Mammary epithelial cell (primary cell): ENCODE measurements at regions of chr10 and their contacts with region 1.

Region 1: DNA sequence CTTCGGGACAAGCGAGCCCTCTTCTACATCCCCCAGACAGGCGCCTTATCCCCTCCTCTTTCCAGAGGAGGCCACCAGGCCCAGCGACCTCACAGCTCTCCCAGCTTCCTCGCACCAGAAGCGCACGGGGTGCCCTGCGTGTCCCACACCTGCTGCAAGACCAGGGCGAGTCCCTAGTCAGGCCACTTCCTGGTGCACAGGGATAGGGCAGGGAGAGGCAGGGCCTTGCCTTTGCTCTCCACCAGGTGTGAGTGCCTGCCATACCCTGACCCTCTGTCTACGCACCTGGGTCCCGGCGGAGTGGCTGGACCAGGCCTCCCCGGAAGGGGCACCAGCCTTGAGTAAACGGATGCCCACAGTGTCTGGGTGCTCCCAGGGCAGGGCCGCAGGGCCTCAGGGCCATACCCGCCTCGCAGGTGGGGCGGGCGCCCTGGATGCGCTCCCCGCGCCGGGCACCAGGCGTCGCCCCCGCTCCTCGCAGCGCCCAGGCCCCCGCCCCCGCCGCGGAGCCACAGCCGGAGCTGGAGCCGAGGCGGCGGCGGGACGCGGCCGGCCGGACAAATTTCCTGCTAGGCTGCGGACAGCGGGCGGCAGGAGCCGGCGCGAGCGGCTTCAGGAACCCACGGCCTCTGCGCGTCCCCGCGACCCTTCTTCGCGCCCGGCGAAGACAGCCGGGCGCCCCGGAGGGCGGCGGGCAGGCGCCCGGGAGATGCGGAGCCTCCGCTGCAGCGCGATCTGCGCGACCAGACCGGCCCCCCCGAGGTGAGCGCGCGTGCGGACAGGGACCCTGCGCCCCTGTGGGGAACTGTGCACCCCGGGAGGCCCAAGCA is at the start of gene PTPRE:
- DNase-seq: peak; percentile 66
- H3K4me3 ChIP-seq: peak within 1 kb of the TSS; percentile 36 to 60 (median 55)
- H3K27ac ChIP-seq: no peak within 1 kb of the TSS
- H3K4me1 ChIP-seq: peaks cover 22% of the 10 kb centered on the region
- H3K27me3 ChIP-seq: no peaks in the 10 kb centered on the region
- CTCF ChIP-seq: peak; percentile 64 to 70
- total RNA-seq, gene PTPRE: 44.2 to 70.5 TPM

Region 2: GRCh38 chr10:127863231-127863825 is 43.4 kb before region 1 on chr10:
- CTCF ChIA-PET with region 1: no interaction called
- dilution Hi-C with region 1: loop called (anchors 5 kb)
- in situ Hi-C with region 1: no loop called
- intact Hi-C with region 1: no loop called
- DNase-seq: peak; percentile 21
- H3K4me3 ChIP-seq: no peak overlapping the region
- H3K27ac ChIP-seq: no peak overlapping the region
- H3K4me1 ChIP-seq: no peaks in the 10 kb centered on the region
- H3K27me3 ChIP-seq: no peaks in the 10 kb centered on the region
- CTCF ChIP-seq: no peak

Region 3: DNA sequence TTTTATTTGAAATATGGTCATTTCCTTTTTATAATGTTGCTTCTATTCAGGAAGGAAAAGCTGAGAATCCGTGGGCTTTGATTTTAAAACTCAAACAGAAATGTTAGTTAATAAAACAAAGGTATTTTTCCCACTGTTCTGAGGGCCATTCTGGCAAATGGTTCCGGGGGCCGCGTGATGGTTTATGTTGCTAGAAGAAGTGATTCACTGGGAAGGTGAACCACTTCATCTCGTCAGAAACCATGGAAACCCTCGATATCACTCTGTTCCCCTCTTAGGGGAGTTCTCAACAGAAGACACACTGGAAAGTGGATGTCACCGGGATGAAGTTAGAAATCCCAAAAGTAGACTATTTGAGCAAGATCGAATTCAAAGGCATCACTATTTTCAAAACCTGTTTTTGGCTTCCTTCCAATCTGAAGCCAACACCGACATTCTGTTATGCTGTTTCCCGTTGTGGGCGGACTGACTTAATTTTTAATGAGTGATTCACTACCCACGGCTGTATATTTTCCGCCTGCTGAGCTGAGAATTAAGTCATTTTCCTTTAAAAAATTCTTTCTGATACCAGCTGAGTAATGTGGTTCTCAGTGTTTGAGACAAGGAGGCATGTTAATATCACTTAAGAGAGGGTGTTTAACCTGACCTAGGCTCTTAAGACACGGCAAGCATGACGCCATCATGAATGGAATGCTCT is 84.2 kb after region 1 on chr10:
- CTCF ChIA-PET with region 1: no interaction called
- dilution Hi-C with region 1: no loop called
- in situ Hi-C with region 1: loop called in 1 of 2 experiments (anchors 5 kb)
- intact Hi-C with region 1: loop called (anchors 5 kb)
- DNase-seq: peak; percentile 91
- H3K4me3 ChIP-seq: no peak overlapping the region
- H3K27ac ChIP-seq: peak overlapping the region; percentile 76
- H3K4me1 ChIP-seq: peaks cover 39% of the 10 kb centered on the region
- H3K27me3 ChIP-seq: no peaks in the 10 kb centered on the region
- CTCF ChIP-seq: no peak

Region 4: DNA sequence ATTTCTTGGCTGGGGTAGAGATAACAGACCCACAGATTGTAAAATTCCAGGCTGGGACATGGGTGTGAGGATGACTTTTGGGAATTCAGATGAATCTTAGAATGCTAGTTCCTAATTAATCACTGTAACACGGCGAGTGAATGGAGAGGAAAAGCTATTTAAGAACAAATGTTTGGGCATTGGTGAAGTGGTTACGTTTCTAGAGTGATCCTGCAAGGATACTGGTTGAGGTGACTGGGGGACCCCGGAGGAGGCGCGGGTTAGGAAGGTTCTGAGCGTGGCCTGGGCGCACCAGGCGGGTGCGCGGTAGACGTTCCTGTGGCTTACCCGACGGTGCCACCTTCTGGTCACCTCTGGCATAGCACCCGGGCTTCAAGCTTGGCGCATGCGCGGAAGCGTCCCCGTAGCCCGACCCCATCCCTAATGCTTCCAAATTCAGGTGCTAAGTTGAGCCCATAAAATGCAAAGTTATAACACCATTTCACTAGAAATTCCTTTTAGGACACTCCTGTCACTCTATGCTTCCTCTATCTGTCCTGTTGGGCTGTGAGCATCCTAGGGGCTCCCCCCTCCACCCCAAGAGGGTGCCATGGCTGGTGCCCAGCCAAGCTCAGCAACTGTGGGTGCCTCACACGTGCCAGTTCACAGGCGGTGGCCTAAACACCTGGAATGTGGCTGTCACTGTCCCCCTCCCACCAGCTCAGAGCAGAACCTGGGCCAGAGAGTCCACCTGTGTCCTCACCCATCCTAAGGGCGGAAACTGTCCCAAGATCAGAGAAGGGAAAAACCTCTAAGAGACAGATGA is 104.6 kb after region 1 on chr10:
- CTCF ChIA-PET with region 1: interaction called, 4 read pairs
- dilution Hi-C with region 1: loop called (anchors 5 kb)
- in situ Hi-C with region 1: loop called in 1 of 2 experiments (anchors 5 kb)
- intact Hi-C with region 1: loop called (anchors 1 kb)
- DNase-seq: peak; percentile 40
- H3K4me3 ChIP-seq: no peak overlapping the region
- H3K27ac ChIP-seq: no peak overlapping the region
- H3K4me1 ChIP-seq: no peaks in the 10 kb centered on the region
- H3K27me3 ChIP-seq: no peaks in the 10 kb centered on the region
- CTCF ChIP-seq: peak; percentile 95 to 100

Region 5: GRCh38 chr10:128069351-128070051 is 162.7 kb after region 1 on chr10:
- CTCF ChIA-PET with region 1: no interaction called
- dilution Hi-C with region 1: no loop called
- in situ Hi-C with region 1: no loop called
- intact Hi-C with region 1: loop called (anchors 1 kb)
- DNase-seq: peak; percentile 85
- H3K4me3 ChIP-seq: no peak overlapping the region
- H3K27ac ChIP-seq: no peak overlapping the region
- H3K4me1 ChIP-seq: peaks cover 33% of the 10 kb centered on the region
- H3K27me3 ChIP-seq: no peaks in the 10 kb centered on the region
- CTCF ChIP-seq: peak; percentile 74 to 84

Region 6: DNA sequence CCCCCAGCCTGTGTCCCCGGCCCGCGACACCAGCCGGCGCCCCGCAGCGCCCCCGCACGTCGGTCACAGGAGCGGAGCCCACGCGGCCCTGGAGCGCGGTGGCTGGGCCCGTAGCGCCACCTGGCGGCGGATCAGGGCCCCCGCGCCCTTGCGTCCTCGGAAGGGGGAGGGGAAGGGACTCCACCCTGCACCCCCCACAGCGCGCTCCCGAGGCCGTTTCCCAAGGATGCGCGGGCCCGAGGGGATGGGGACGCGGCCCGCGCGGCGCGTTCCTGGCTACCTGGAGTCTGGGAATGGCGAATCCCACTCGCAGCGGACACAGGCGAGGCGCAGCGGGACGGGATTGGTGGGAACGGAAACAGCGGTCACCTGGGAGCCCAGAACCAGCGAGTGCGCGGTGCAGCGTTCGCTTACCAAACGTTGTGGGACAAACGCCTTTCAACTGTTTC is 243.3 kb after region 1 on chr10:
- CTCF ChIA-PET with region 1: no interaction called
- dilution Hi-C with region 1: no loop called
- in situ Hi-C with region 1: loop called in 1 of 2 experiments (anchors 25 kb)
- intact Hi-C with region 1: loop called (anchors 5 kb)
- DNase-seq: peak; percentile 65
- H3K4me3 ChIP-seq: peak overlapping the region; percentile 48 to 85 (median 74)
- H3K27ac ChIP-seq: no peak overlapping the region
- H3K4me1 ChIP-seq: peaks cover 12% of the 10 kb centered on the region
- H3K27me3 ChIP-seq: no peaks in the 10 kb centered on the region
- CTCF ChIP-seq: peak; percentile 66 to 88